HCT116 (cell line): ENCODE measurements at regions of chr6 and their contacts with region 1.

Region 1: GRCh38 chr6:35522660-35523658 is 10.3 kb upstream of the TULP1 start:
- DNase-seq: peak; percentile 39
- ATAC-seq: peak; percentile 97
- H3K4me3 ChIP-seq: 0 out of 4 replicates have a peak overlapping the region, but pooled peaks of 1 of the 2 experiments have one; percentile 2
- H3K27ac ChIP-seq: no peak overlapping the region
- H3K4me1 ChIP-seq: peaks cover 0 to 17% of the 10 kb centered on the region in 2 experiments; a peak in 3 of 4 replicates
- H3K27me3 ChIP-seq: no peaks in the 10 kb centered on the region
- CTCF ChIP-seq: peak; percentile 90 to 92 (median 90)
- POLR2A ChIP-seq: no peak
- RAD21 ChIP-seq: peak; percentile 98

Region 2: DNA sequence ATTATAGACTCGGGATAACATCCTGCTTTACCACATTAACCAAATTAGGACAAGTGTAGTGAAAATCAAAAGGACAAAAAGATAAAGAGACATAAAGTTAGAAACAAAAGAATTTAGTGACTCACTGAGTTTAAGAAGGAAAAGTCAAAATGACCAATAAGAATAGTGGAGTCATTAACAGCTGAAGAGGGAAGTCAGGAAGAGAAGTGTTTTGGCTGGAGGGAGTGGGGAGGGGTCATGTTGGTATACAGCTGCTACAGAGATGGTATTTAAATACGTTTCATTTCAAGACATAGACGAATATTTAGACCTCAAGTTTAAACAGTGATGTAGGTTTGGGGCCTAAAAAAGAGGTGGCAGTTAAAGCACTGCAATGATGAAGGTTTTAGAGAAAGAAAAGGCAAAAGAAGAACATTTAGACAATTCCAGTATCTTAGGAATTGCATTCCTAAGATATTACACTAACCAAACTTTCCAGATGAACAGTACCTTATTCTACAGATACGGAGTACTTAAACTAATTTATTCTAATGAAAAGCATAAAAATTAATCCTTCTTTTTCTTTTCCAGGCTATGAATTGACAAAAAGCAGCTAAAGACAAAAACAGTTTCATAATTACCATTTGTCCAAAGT is 155.2 kb after region 1 on chr6:
- CTCF ChIA-PET with region 1: no interaction called
- POLR2A ChIA-PET with region 1: no interaction called
- RAD21 ChIA-PET with region 1: no interaction called
- intact Hi-C with region 1: no loop called
- DNase-seq: no peak
- ATAC-seq: no peak
- H3K4me3 ChIP-seq: no peak overlapping the region
- H3K27ac ChIP-seq: no peak overlapping the region
- H3K4me1 ChIP-seq: peaks cover 8 to 9% of the 10 kb centered on the region in 2 experiments; a peak in 2 of 4 replicates
- H3K27me3 ChIP-seq: no peaks in the 10 kb centered on the region
- CTCF ChIP-seq: no peak
- POLR2A ChIP-seq: no peak
- RAD21 ChIP-seq: no peak

Region 3: GRCh38 chr6:35737413-35738211 is 214.7 kb after region 1 on chr6:
- CTCF ChIA-PET with region 1: interaction called, 66 read pairs
- POLR2A ChIA-PET with region 1: no interaction called
- RAD21 ChIA-PET with region 1: interaction called, 14 to 20 read pairs
- intact Hi-C with region 1: loop called (anchors 1 kb)
- DNase-seq: peak; percentile 65
- ATAC-seq: peak; percentile 73
- H3K4me3 ChIP-seq: no peak overlapping the region
- H3K27ac ChIP-seq: no peak overlapping the region; the same call in 1 of the 2 replicates
- H3K4me1 ChIP-seq: peaks cover 22 to 24% of the 10 kb centered on the region in 2 experiments
- H3K27me3 ChIP-seq: no peaks in the 10 kb centered on the region
- CTCF ChIP-seq: peak in 2 of 3 experiments; percentile 71 to 84; a peak in 4 of 6 replicates
- POLR2A ChIP-seq: no peak
- RAD21 ChIP-seq: no peak

Region 4: DNA sequence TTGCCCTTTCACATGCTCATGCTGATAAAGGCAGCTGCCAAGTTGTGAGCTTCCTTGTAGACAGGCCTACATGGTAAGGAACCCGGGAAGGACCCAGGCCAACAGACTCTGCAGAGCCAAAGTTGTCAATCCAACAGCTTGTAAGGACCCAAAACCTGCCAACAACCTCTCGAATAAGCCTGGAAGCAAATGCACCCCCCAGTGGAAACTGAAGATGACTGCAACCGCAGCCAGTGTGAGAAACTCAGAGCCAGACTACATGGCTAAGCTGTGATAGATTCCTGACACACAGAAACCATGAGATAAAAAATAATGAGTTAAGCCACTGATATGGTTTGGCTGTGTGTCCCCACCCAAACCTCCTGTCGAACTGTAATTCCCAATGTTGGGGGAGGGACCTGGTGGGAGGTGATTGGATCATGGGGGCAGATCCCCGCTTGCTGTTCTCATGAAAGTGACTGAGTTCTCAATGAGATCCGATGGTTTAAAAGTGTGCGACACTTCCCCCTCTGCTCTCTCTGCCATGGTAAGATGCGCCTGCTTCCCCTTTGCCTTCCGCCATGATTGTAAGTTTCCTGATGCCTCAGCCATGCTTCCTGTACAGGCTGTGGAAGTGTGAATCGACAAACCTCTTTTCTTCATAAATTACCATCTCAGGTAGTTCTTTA is 234.6 kb after region 1 on chr6:
- CTCF ChIA-PET with region 1: interaction called, 9 read pairs
- POLR2A ChIA-PET with region 1: interaction called, 4 read pairs
- RAD21 ChIA-PET with region 1: interaction called in 1 of 2 experiments, 5 read pairs
- intact Hi-C with region 1: loop called (anchors 5 kb)
- DNase-seq: peak; percentile 71
- ATAC-seq: peak; percentile 94
- H3K4me3 ChIP-seq: no peak overlapping the region
- H3K27ac ChIP-seq: no peak overlapping the region
- H3K4me1 ChIP-seq: peaks cover 0 to 13% of the 10 kb centered on the region in 2 experiments; a peak in 1 of 4 replicates
- H3K27me3 ChIP-seq: no peaks in the 10 kb centered on the region
- CTCF ChIP-seq: peak; percentile 49 to 86 (median 79); a peak in 5 of 6 replicates
- POLR2A ChIP-seq: no peak
- RAD21 ChIP-seq: peak; percentile 65

Region 5: DNA sequence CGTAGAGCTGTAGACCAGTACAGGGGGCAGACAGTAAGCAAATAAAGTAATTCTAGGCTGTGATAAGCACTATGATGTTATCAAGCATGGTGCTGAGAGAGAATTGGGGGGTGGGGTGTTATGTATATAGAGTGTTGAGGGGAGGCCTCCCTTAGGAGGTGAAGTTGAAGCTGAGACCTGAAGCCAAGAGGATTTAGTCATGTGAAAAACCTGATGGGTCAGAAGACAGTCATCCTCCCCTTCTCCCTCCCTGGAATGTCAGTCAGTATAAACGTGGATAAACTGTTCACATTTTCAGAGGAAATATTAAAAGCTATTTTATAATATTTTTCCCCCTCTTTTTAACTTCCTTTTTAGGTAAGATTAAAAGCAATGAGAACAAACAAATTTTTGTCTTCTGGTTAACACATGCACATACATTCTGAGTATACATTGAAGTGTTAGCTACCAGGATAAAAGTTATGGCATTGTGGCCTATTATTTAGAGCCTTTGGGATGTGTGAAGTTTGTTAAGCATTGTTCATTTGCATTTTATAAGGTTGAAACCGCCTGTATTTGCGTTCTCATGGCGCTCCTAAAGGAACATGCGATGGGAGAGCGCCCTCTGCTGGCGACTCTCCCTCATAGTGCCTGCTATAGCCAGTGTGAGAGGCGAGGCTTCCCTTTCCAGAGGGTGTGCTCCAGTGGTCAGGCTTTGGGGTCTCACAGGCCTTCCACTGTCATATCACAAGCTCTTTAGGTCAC is 572.0 kb after region 1 on chr6:
- CTCF ChIA-PET with region 1: interaction called, 4 read pairs
- POLR2A ChIA-PET with region 1: no interaction called
- RAD21 ChIA-PET with region 1: no interaction called
- intact Hi-C with region 1: loop called (anchors 10 kb)
- DNase-seq: peak; percentile 47
- ATAC-seq: peak; percentile 99
- H3K4me3 ChIP-seq: no peak overlapping the region
- H3K27ac ChIP-seq: no peak overlapping the region
- H3K4me1 ChIP-seq: no peaks in the 10 kb centered on the region
- H3K27me3 ChIP-seq: no peaks in the 10 kb centered on the region
- CTCF ChIP-seq: peak; percentile 77 to 95 (median 95)
- POLR2A ChIP-seq: no peak
- RAD21 ChIP-seq: peak; percentile 89